Right lobe of liver (tissue), 6 donors: ENCODE measurements at regions of chr1 and their contacts with region 1.

Region 1: GRCh38 chr1:43073490-43074230 is 98.4 kb downstream of the EBNA1BP2 start:
- DNase-seq: peak; percentile 50 to 73 (median 70)
- ATAC-seq: peak; percentile 91 to 97 (median 95)
- H3K4me3 ChIP-seq: no peak overlapping the region
- H3K27ac ChIP-seq: no peak overlapping the region
- H3K4me1 ChIP-seq: no peaks in the 10 kb centered on the region
- H3K27me3 ChIP-seq: no peaks in the 10 kb centered on the region
- CTCF ChIP-seq: peak; percentile 74 to 92 (median 82)
- POLR2A ChIP-seq: no peak

Region 2: GRCh38 chr1:42777852-42778251 is 295.8 kb before region 1 on chr1:
- intact Hi-C with region 1: loop called in 1 of 2 experiments (anchors 10 kb)
- DNase-seq: no peak
- ATAC-seq: peak; percentile 67 to 76 (median 74)
- H3K4me3 ChIP-seq: no peak overlapping the region
- H3K27ac ChIP-seq: no peak overlapping the region
- H3K4me1 ChIP-seq: peaks cover 0 to 11% (median 0%) of the 10 kb centered on the region in 4 donors
- H3K27me3 ChIP-seq: no peaks in the 10 kb centered on the region
- CTCF ChIP-seq: peak; percentile 56 to 64 (median 61)
- POLR2A ChIP-seq: no peak

Region 3: DNA sequence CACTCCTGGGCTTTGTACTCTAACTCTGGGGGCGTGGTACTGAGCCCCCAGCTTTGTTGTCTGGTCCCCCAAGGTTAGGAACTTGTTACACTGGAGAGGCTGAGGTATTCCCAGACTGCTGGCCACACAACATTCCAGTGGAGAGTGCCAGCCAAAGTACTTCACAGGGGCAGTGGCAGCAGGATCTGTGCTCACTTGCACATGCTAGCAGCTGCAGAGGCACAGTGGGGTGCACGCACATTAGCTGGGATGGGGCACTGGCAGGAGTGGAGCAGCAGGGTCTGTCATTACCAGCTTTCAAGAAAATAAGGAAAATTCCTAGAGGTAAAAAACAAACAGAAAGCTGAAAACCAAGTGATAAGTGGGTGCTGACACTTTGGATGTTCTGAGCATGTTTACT is 196.3 kb before region 1 on chr1:
- intact Hi-C with region 1: no loop called
- DNase-seq: no peak
- ATAC-seq: no peak
- H3K4me3 ChIP-seq: no peak overlapping the region
- H3K27ac ChIP-seq: no peak overlapping the region
- H3K4me1 ChIP-seq: peaks cover 0 to 13% (median 0%) of the 10 kb centered on the region in 4 donors
- H3K27me3 ChIP-seq: no peaks in the 10 kb centered on the region
- CTCF ChIP-seq: no peak
- POLR2A ChIP-seq: no peak

Region 4: GRCh38 chr1:42992054-42992645 is 81.5 kb before region 1 on chr1:
- intact Hi-C with region 1: no loop called
- DNase-seq: no peak
- ATAC-seq: no peak
- H3K4me3 ChIP-seq: no peak overlapping the region
- H3K27ac ChIP-seq: no peak overlapping the region
- H3K4me1 ChIP-seq: no peaks in the 10 kb centered on the region
- H3K27me3 ChIP-seq: no peaks in the 10 kb centered on the region
- CTCF ChIP-seq: no peak
- POLR2A ChIP-seq: no peak

Region 5: GRCh38 chr1:43035821-43036741 is 37.6 kb before region 1 on chr1:
- intact Hi-C with region 1: no loop called
- DNase-seq: no peak
- ATAC-seq: peak in 1 of 4 donors; percentile 21
- H3K4me3 ChIP-seq: no peak overlapping the region
- H3K27ac ChIP-seq: no peak overlapping the region
- H3K4me1 ChIP-seq: no peaks in the 10 kb centered on the region
- H3K27me3 ChIP-seq: no peaks in the 10 kb centered on the region
- CTCF ChIP-seq: no peak
- POLR2A ChIP-seq: no peak